ENCODE measurements at regions of chr1 and their contacts with region 1.

Region 1: GRCh38 chr1:99818063-99818699 is 32.0 kb upstream of the AGL start:
- DNase-seq: peak; percentile 58 to 69
- ATAC-seq: peak; percentile 94 to 97
- H3K4me3 ChIP-seq: peak overlapping the region in 1 of 4 donors; percentile 20
- H3K27ac ChIP-seq: peak overlapping the region; percentile 89 to 95 (median 91)
- H3K4me1 ChIP-seq: peaks cover 31 to 34% of the 10 kb centered on the region in 2 donors
- H3K27me3 ChIP-seq: no peaks in the 10 kb centered on the region
- CTCF ChIP-seq: no peak
- POLR2A ChIP-seq: no peak

Region 2: GRCh38 chr1:99185196-99185595 is 633.0 kb before region 1 on chr1:
- in situ Hi-C with region 1: no loop called
- intact Hi-C with region 1: no loop called
- DNase-seq: no peak
- ATAC-seq: no peak
- H3K4me3 ChIP-seq: no peak overlapping the region
- H3K27ac ChIP-seq: no peak overlapping the region
- H3K4me1 ChIP-seq: peaks cover 0 to 8% of the 10 kb centered on the region in 2 donors
- H3K27me3 ChIP-seq: no peaks in the 10 kb centered on the region
- CTCF ChIP-seq: no peak
- POLR2A ChIP-seq: no peak

Region 3: DNA sequence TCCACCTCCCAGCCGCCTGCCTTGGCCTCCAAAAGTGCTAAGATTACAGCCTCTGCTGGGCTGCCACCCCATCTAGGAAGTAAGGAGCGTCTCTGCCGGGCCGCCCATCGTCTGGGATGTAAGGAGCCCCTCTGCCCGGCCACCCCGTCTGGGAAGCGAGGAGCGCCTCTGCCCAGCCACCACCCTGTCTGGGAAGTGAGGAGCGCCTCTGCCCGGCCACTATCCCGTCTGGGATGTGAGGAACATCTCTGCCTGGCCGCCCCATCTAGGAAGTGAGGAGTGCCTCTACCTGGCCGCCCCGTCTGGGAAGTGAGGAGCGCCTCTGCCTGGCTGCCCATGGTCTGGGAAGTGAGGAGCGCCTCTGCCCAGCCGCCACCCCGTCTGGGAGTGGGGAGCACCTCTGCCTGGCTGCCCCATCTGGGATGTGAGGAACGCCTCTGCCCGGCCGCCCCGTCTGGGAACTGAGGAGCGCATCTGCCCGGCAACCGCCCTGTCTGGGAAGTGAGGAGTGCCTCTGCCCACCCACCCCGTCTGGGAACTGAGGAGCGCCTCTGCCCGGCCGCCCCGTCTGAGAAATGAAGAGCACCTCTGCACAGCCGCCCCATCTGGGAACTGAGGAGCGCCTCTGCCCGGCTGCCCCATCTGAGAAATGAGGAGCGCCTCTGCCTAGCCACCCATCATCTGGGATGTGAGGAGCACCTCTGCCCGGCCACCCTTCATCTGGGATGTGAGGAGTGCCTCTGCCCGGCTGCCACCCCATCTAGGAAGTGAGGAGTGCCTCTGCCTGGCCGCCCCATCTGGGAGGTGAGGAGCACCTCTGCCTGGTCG is 310.1 kb before region 1 on chr1:
- in situ Hi-C with region 1: no loop called
- intact Hi-C with region 1: no loop called
- DNase-seq: no peak
- ATAC-seq: no peak
- H3K4me3 ChIP-seq: no peak overlapping the region
- H3K27ac ChIP-seq: no peak overlapping the region
- H3K4me1 ChIP-seq: no peaks in the 10 kb centered on the region
- H3K27me3 ChIP-seq: no peaks in the 10 kb centered on the region
- CTCF ChIP-seq: no peak
- POLR2A ChIP-seq: no peak

Region 4: GRCh38 chr1:99685516-99686180 is 132.5 kb before region 1 on chr1:
- in situ Hi-C with region 1: no loop called
- intact Hi-C with region 1: loop called (anchors 5 kb)
- DNase-seq: peak; percentile 93 to 99
- ATAC-seq: peak; percentile 95 to 96
- H3K4me3 ChIP-seq: no peak overlapping the region
- H3K27ac ChIP-seq: peak overlapping the region; percentile 79 to 97 (median 90)
- H3K4me1 ChIP-seq: peaks cover 50 to 55% of the 10 kb centered on the region in 2 donors
- H3K27me3 ChIP-seq: no peaks in the 10 kb centered on the region
- CTCF ChIP-seq: peak; percentile 18 to 73 (median 64)
- POLR2A ChIP-seq: no peak

Region 5: DNA sequence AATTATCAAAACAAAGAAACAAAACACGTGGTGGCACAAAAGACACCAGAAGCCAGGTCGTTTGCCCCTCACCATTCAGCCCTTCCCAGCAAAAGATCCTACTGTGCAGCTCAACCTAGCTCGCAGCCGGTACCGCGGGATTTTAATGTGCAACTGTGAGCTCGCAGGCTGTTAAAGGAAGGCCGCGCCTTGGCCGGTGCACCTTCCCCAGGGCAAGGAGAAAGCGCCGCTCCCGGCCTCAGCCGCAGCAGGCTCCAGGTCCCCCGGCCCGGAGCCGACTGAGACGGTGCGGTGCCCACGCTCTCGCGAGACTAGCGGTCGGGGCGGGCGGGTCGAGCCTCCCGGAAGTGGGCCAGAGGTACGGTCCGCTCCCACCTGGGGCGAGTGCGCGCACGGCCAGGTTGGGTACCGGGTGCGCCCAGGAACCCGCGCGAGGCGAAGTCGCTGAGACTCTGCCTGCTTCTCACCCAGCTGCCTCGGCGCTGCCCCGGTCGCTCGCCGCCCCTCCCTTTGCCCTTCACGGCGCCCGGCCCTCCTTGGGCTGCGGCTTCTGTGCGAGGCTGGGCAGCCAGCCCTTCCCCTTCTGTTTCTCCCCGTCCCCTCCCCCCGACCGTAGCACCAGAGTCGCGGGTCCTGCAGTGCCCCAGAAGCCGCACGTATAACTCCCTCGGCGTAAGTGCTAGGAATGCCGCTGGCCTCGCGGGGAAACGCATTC is 31.7 kb after region 1 on chr1 and contains the start of gene AGL:
- in situ Hi-C with region 1: loop called in 1 of 4 experiments (anchors 5 kb)
- intact Hi-C with region 1: loop called (anchors 1 kb)
- DNase-seq: peak; percentile 82 to 91
- ATAC-seq: peak; percentile 81 to 85
- H3K4me3 ChIP-seq: peak within 1 kb of the TSS; percentile 79 to 89 (median 86)
- H3K27ac ChIP-seq: peak within 1 kb of the TSS; percentile 94 to 95 (median 94)
- H3K4me1 ChIP-seq: peaks cover 51 to 55% of the 10 kb centered on the region in 2 donors
- H3K27me3 ChIP-seq: no peaks in the 10 kb centered on the region
- CTCF ChIP-seq: no peak
- POLR2A ChIP-seq: peak; percentile 87 to 89
- total RNA-seq, gene AGL: 49.3 to 143 (median 103) TPM

Region 6: GRCh38 chr1:99855914-99856450 is 37.8 kb after region 1 on chr1:
- in situ Hi-C with region 1: loop called in 1 of 4 experiments (anchors 5 kb)
- intact Hi-C with region 1: no loop called
- DNase-seq: no peak
- ATAC-seq: peak; percentile 96 to 97
- H3K4me3 ChIP-seq: no peak overlapping the region
- H3K27ac ChIP-seq: peak overlapping the region; percentile 94 to 95 (median 94)
- H3K4me1 ChIP-seq: peaks cover 44 to 50% of the 10 kb centered on the region in 2 donors
- H3K27me3 ChIP-seq: no peaks in the 10 kb centered on the region
- CTCF ChIP-seq: no peak
- POLR2A ChIP-seq: no peak